ENCODE measurements at regions of chr9 and their contacts with region 1.

Region 1: DNA sequence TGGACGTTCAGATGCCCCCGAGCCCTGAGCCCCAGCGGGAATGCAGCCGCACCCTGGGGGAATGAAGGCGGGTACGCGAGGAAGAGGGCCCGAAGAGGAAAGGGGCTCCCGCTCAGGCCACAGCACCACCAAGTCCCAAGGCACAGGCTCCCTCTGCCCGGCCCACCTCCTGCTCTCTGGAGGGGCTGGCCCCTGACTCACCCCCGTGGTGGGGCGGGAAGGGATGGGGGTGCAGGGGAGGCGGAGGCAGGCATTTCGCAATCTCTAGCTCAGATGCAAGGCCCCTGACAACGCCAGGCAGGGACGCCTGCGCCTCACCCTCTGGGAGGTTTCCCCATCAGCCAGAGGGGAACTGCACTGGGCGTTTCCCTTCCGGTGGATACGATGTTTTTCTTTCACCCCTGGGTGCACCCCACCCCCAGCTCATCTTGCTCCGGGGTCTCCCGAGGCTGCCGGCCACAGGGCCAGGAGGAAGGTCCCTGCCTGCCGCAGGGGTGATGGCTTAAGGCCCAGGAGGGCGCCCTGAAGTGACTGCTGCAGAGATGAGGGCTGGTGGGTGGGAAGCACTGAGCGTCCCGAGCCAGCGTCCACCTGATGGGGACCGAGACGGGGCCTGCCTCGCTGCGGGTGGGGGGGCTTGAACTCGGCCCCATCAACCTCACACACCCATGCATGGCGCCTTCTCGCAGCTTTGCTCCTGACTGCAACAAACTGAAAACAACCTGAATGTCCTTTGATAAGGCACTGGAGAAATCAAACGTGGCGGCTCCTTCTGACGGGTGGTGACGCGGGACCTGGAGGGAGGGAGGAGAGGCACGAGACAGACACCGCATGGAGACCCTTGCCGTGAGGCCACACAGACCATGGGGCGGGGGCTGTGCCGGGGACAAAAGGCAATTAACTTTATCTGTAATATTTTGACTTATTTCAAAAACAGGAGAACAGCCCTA is 48.8 kb downstream of the NACC2 start:
- DNase-seq: peak; percentile 67 to 79 (median 75)
- ATAC-seq: peak; percentile 22 to 25
- H3K4me3 ChIP-seq: no peak overlapping the region
- H3K27ac ChIP-seq: no peak overlapping the region
- H3K4me1 ChIP-seq: peaks cover 2% of the 10 kb centered on the region
- H3K27me3 ChIP-seq: no peaks in the 10 kb centered on the region

Region 2: DNA sequence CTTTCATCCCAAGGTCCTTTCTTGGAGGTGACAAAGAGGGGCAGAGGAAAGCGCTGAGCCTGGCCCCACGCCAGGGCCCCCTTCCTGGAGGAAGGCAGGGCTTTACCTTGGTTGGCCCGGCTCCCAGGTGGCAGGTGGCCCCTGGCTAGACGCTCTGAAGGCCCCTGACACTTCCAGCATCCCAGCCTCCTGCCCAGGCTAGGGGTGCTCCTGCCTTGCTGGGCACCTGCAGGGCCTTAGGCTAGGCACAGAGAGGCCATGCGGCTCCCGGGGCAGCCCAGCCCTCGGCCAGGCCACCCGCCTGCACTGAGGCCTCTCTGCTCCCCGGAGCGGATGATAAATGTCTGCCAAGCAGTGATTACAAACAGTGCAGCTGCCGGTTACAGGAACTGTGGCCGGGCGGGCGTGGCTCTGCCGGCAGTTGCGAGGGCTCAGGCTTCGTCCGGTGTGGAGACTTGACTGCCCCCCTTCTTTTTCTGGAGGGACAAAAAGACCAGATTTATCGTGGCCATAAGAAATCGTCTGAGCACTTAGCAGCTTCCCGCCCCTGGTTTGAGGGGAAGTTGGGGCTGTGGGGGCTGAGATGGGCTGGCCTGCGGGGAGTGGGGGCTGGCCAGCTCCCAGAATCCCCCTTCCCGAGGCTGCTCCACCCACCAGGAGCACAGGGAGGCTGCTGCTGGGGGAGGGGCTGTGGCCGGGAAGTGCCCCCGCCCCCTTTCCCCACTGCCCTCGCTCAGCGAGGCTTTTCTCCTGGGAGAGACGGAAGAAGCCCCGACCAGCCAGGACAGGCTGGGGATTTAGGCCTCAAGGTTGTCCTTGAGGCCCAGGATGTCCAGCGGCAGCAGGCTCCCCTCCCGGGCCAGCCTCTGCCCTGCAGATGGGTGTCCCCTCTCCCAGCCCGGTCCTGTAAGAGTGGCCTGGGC is 53.5 kb before region 1 on chr9:
- intact Hi-C with region 1: no loop called
- DNase-seq: peak; percentile 91 to 97 (median 95)
- ATAC-seq: peak; percentile 89
- H3K4me3 ChIP-seq: peak overlapping the region; percentile 2
- H3K27ac ChIP-seq: peak overlapping the region; percentile 37
- H3K4me1 ChIP-seq: no peaks in the 10 kb centered on the region
- H3K27me3 ChIP-seq: no peaks in the 10 kb centered on the region

Region 3: GRCh38 chr9:137240861-137241489 is 1194.7 kb after region 1 on chr9 and contains the start of gene TUBB4B:
- intact Hi-C with region 1: loop called in 1 of 4 experiments (anchors 10 kb)
- DNase-seq: peak; percentile 100
- ATAC-seq: peak; percentile 86 to 87
- H3K4me3 ChIP-seq: peak within 1 kb of the TSS; percentile 90
- H3K27ac ChIP-seq: peak within 1 kb of the TSS; percentile 96
- H3K4me1 ChIP-seq: peaks cover 3% of the 10 kb centered on the region
- H3K27me3 ChIP-seq: no peaks in the 10 kb centered on the region
- total RNA-seq, gene TUBB4B: 203 to 461 (median 332) TPM

Measured in right cardiac atrium (tissue), 5 donors.